ENCODE measurements at regions of chr1 and their contacts with region 1.

Region 1: DNA sequence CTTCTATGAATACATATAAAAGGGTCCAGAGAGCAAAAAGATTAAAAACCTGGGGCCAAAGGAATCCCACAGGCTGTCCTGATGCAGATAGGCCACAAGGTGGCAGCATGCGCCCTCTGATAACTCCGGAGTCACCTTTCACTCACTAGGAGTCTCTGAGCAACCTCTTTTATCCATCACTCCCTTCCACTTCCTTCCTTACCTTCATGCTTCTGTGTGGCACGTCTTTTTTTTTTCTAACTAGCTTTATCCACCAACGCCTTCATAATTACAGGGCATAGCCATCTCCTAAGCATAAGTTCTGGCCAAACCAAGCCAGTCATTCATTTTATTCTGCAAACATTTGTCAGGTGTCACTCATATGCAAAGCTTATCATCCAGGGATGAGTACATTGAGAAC is 3.9 kb upstream of the PGLYRP4 start:
- H3K4me3 ChIP-seq: no peak overlapping the region
- H3K27ac ChIP-seq: no peak overlapping the region
- H3K4me1 ChIP-seq: no peaks in the 10 kb centered on the region
- CTCF ChIP-seq: peak; percentile 52; the same call in 1 of the 2 replicates

Region 2: DNA sequence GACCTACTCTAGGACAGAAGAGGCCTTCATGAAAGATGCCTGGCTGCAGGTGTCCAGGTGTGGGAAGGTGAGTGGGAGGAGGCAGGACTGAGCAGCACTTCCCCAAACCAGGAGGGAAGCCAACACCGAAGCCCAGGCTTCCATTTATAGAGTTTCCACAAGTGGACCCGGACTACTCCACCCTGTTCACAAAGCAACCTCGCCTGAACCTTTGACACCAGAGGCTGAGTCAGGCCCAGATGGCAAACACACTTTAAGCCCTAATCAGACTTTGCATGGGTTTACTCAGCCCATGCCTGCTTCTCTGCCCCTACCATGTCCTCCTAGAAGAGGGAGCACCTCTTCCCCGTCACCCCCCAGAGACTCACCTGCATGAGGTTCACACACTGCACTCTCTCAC is 121.2 kb before region 1 on chr1:
- CTCF ChIA-PET with region 1: no interaction called
- POLR2A ChIA-PET with region 1: no interaction called
- H3K4me3 ChIP-seq: no peak overlapping the region
- H3K27ac ChIP-seq: no peak overlapping the region
- H3K4me1 ChIP-seq: no peaks in the 10 kb centered on the region
- CTCF ChIP-seq: no peak

Region 3: DNA sequence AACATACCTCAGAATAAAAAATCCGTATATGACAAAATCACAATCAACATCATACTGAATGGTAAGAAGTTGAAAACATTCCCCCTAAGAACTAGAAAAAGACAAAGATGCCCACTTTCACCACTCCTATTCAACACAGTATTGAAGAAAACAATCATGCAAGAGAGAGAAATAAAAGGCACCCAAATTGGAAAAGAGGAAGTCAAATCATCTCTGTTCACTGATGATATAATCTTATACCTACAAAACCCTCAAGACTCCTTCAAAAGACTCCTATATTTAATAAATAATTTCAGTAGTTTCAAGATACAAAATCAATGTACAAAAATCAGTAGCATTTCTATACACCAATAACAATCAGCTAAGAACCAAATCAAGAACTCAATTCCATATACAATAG is 18.6 kb before region 1 on chr1:
- CTCF ChIA-PET with region 1: interaction called, 11 read pairs
- POLR2A ChIA-PET with region 1: no interaction called
- H3K4me3 ChIP-seq: no peak overlapping the region
- H3K27ac ChIP-seq: no peak overlapping the region
- H3K4me1 ChIP-seq: no peaks in the 10 kb centered on the region
- CTCF ChIP-seq: no peak

Region 4: GRCh38 chr1:153465811-153466636 is 113.5 kb after region 1 on chr1:
- CTCF ChIA-PET with region 1: interaction called, 10 read pairs
- POLR2A ChIA-PET with region 1: no interaction called
- H3K4me3 ChIP-seq: no peak overlapping the region
- H3K27ac ChIP-seq: no peak overlapping the region
- H3K4me1 ChIP-seq: no peaks in the 10 kb centered on the region
- CTCF ChIP-seq: peak; percentile 67

Region 5: DNA sequence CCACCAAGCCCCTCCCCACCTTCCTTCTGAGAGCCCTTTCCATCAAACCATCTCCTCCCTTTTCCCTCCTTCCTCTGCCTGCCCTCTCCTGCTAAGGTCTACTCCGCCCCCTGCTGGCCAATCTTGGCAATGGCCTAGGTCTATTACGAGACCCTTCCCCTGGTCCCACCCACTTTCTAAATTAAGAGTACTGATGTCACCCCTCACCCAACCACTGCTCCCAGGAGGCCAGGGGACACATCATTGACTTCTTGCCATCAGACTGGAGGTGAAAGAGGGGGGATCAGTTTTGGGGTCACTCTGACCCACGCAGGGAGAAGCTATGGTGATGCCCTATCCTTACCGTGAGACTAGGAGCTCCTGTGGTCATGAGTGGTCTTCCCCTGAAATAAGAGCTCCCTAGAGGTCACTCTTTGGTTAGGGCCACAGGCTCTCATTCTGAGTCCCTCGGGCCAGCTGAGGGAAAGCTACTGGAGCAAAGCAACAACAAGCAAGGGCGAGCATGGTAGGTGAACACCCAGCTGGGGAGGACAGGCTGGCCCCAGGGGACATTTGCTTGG is 142.5 kb after region 1 on chr1:
- CTCF ChIA-PET with region 1: interaction called, 259 read pairs
- POLR2A ChIA-PET with region 1: no interaction called
- H3K4me3 ChIP-seq: no peak overlapping the region
- H3K27ac ChIP-seq: no peak overlapping the region
- H3K4me1 ChIP-seq: no peaks in the 10 kb centered on the region; the same call in 1 of the 2 replicates
- CTCF ChIP-seq: peak; percentile 92